ENCODE measurements at regions of chrX and their contacts with region 1.

Region 1: DNA sequence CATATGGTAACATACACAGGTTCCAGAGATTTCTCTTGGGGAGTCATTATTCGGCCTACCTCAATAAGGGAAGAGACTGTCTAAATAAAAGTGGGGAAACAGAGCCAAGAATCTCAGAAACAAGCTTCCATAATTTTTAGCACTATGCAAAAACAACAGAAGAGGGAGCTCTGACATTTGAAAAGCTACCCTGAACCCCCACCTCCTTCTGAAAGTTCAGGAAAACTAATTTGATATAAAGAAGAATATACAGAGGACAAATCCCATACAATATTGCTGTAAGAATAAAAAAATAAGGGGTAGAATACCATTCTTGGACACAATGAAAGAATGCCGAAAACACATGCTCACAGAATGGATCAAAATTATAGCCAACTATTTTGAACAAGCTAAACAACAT is 14.3 kb upstream of the ZNF41 start:
- DNase-seq: no peak
- H3K4me3 ChIP-seq: no peak overlapping the region
- H3K27ac ChIP-seq: no peak overlapping the region
- H3K27me3 ChIP-seq: no peaks in the 10 kb centered on the region
- CTCF ChIP-seq: peak; percentile 57

Region 2: GRCh38 chrX:47523297-47523696 is 26.0 kb after region 1 on chrX:
- CTCF ChIA-PET with region 1: interaction called, 29 read pairs
- POLR2A ChIA-PET with region 1: interaction called, 3 read pairs
- DNase-seq: peak; percentile 29
- H3K4me3 ChIP-seq: peak overlapping the region; percentile 59
- H3K27ac ChIP-seq: no peak overlapping the region
- H3K27me3 ChIP-seq: no peaks in the 10 kb centered on the region
- CTCF ChIP-seq: peak; percentile 72